CD8-positive, alpha-beta T cell (primary cell): ENCODE measurements at regions of chr19 and their contacts with region 1.

Region 1: GRCh38 chr19:10695401-10696398 is 5.5 kb upstream of the QTRT1 start:
- DNase-seq: peak; percentile 77 to 94 (median 87)
- ATAC-seq: peak; percentile 97
- H3K4me3 ChIP-seq: peak overlapping the region; percentile 33 to 58
- H3K4me3 Mint-ChIP-seq: peak overlapping the region; percentile 78
- H3K27ac ChIP-seq: no peak overlapping the region
- H3K27ac Mint-ChIP-seq: no peak overlapping the region
- H3K4me1 ChIP-seq: peaks cover 12% of the 10 kb centered on the region
- H3K4me1 Mint-ChIP-seq: peaks cover 17% of the 10 kb centered on the region
- H3K27me3 ChIP-seq: peaks cover 0 to 2% of the 10 kb centered on the region in 2 experiments
- H3K27me3 Mint-ChIP-seq: peaks cover 5% of the 10 kb centered on the region
- CTCF ChIP-seq: no peak

Region 2: DNA sequence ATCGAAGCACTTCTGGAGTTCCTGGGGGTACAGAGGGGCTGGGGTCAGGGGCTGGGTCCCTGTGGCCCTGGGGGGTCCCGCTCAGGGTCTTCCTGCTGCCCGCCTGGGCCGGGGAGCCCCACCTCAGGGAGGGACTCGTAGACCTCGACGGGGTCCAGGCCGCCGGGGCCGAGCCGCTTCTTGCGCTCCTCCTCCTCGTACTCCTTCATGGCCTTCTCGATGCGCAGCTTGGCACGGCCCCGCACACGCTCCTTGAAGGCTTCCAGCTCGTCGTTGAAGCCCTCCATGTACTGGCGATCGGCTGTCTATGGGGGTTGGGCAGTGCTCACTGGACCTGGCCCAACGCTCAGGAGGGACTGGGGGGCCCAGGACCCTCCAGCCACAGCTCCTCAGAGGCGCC is 302.6 kb before region 1 on chr19:
- CTCF ChIA-PET with region 1: no interaction called
- POLR2A ChIA-PET with region 1: no interaction called
- intact Hi-C with region 1: no loop called
- DNase-seq: peak in 1 of 9 experiments; percentile 21
- ATAC-seq: no peak
- H3K4me3 ChIP-seq: no peak overlapping the region
- H3K4me3 Mint-ChIP-seq: no peak overlapping the region
- H3K27ac ChIP-seq: no peak overlapping the region
- H3K27ac Mint-ChIP-seq: no peak overlapping the region
- H3K4me1 ChIP-seq: no peaks in the 10 kb centered on the region
- H3K4me1 Mint-ChIP-seq: peaks cover 5% of the 10 kb centered on the region
- H3K27me3 ChIP-seq: no peaks in the 10 kb centered on the region
- H3K27me3 Mint-ChIP-seq: no peaks in the 10 kb centered on the region
- CTCF ChIP-seq: no peak

Region 3: GRCh38 chr19:10491472-10492047 is 204.1 kb before region 1 on chr19:
- CTCF ChIA-PET with region 1: interaction called, 8 read pairs
- POLR2A ChIA-PET with region 1: no interaction called
- intact Hi-C with region 1: loop called in 1 of 2 experiments (anchors 1 kb)
- DNase-seq: no peak
- ATAC-seq: no peak
- H3K4me3 ChIP-seq: no peak overlapping the region
- H3K4me3 Mint-ChIP-seq: no peak overlapping the region
- H3K27ac ChIP-seq: no peak overlapping the region
- H3K27ac Mint-ChIP-seq: no peak overlapping the region
- H3K4me1 ChIP-seq: no peaks in the 10 kb centered on the region
- H3K4me1 Mint-ChIP-seq: peaks cover 6% of the 10 kb centered on the region
- H3K27me3 ChIP-seq: no peaks in the 10 kb centered on the region
- H3K27me3 Mint-ChIP-seq: no peaks in the 10 kb centered on the region
- CTCF ChIP-seq: no peak

Region 4: DNA sequence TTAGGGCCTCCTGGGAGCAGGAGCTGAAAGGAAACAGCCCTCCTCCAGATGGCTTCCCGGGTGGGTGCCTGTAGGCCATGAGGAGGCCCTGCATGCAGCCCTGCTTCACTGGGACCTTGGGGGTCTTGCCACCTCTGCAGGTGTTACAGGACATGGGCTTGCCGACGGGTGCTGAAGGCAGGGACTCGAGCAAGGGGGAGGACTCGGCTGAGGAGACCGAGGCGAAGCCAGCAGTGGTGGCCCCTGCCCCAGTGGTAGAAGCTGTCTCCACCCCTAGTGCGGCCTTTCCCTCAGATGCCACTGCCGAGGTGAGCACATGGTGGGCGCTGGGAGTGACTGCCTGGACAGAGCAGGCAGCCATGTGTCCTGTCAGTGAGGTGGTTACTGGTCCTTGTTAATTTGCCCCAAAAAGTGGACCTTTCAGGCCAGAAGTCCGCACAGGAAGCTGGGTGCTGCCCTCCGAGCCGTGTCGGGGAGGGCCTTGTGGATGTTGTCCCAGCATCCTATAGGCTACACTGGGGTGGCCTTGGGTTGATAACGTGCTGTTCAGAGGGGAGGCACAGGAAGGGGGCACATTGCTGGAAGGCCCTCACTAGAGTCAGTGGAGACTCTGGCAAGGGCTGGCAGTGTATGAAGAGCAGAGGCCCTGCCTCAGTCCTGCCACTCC is 13.2 kb before region 1 on chr19:
- CTCF ChIA-PET with region 1: interaction called, 18 read pairs
- POLR2A ChIA-PET with region 1: interaction called, 6 read pairs
- intact Hi-C with region 1: no loop called
- DNase-seq: no peak
- ATAC-seq: no peak
- H3K4me3 ChIP-seq: no peak overlapping the region
- H3K4me3 Mint-ChIP-seq: no peak overlapping the region
- H3K27ac ChIP-seq: no peak overlapping the region
- H3K27ac Mint-ChIP-seq: no peak overlapping the region
- H3K4me1 ChIP-seq: no peaks in the 10 kb centered on the region
- H3K4me1 Mint-ChIP-seq: no peaks in the 10 kb centered on the region
- H3K27me3 ChIP-seq: no peaks in the 10 kb centered on the region
- H3K27me3 Mint-ChIP-seq: no peaks in the 10 kb centered on the region
- CTCF ChIP-seq: no peak

Region 5: GRCh38 chr19:10730923-10731322 is 35.2 kb after region 1 on chr19:
- CTCF ChIA-PET with region 1: no interaction called
- POLR2A ChIA-PET with region 1: no interaction called
- intact Hi-C with region 1: no loop called
- DNase-seq: peak in 2 of 9 experiments; percentile 37 to 46
- ATAC-seq: no peak
- H3K4me3 ChIP-seq: no peak overlapping the region
- H3K4me3 Mint-ChIP-seq: peak overlapping the region; percentile 12
- H3K27ac ChIP-seq: peak overlapping the region; percentile 32 to 73
- H3K27ac Mint-ChIP-seq: peak overlapping the region; percentile 98
- H3K4me1 ChIP-seq: peaks cover 35% of the 10 kb centered on the region
- H3K4me1 Mint-ChIP-seq: peaks cover 56% of the 10 kb centered on the region
- H3K27me3 ChIP-seq: no peaks in the 10 kb centered on the region
- H3K27me3 Mint-ChIP-seq: no peaks in the 10 kb centered on the region
- CTCF ChIP-seq: no peak